GM12878 (cell line): ENCODE measurements at regions of chr1 and their contacts with region 1.

Region 1: GRCh38 chr1:202112839-202113672 is 9.7 kb upstream of the GPR37L1 start:
- DNase-seq: no peak
- ATAC-seq: peak; percentile 24
- H3K4me3 ChIP-seq: no peak overlapping the region
- H3K27ac ChIP-seq: no peak overlapping the region
- H3K4me1 ChIP-seq: peaks cover 14% of the 10 kb centered on the region
- H3K27me3 ChIP-seq: no peaks in the 10 kb centered on the region
- CTCF ChIP-seq: no peak
- EP300 ChIP-seq: no peak
- POLR2A ChIP-seq: no peak
- RAD21 ChIP-seq: no peak

Region 2: DNA sequence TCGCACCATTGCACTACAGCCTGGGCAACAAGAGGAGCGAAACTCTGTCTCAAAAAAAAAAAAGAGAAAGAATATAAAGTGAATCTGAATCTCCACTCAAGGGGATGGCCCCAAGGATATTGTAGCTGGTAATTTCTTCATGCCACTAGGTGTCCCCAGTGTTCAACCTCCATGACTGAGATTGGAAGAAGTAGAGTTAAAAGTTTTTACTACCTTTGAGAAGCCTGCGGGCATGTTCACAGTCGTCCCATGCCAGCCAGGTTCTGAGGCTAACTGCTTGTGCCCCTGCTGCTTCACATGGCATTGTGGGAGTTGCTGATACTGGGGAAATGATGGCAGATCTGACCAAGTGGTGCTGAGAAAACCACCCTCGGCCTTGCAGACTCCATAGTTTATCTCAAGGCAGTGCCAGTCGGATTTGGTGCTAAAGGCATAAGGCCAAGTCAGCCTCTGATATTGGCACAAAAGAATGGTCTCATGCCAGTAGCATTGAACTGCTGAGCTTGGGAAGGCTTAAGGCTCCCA is 235.1 kb before region 1 on chr1:
- CTCF ChIA-PET with region 1: interaction called, 13 read pairs
- POLR2A ChIA-PET with region 1: no interaction called
- RAD21 ChIA-PET with region 1: interaction called, 3 read pairs
- SMC1A ChIA-PET with region 1: interaction called, 3 read pairs
- in situ Hi-C with region 1: no loop called
- intact Hi-C with region 1: loop called (anchors 5 kb)
- DNase-seq: no peak
- ATAC-seq: peak; percentile 86
- H3K4me3 ChIP-seq: no peak overlapping the region
- H3K27ac ChIP-seq: no peak overlapping the region
- H3K4me1 ChIP-seq: peaks cover 5% of the 10 kb centered on the region; the same call in 1 of the 2 replicates
- H3K27me3 ChIP-seq: no peaks in the 10 kb centered on the region
- CTCF ChIP-seq: peak; percentile 52 to 68 (median 57)
- EP300 ChIP-seq: no peak
- POLR2A ChIP-seq: peak; percentile 36; the same call in 1 of the 2 replicates
- RAD21 ChIP-seq: peak; percentile 52

Region 3: DNA sequence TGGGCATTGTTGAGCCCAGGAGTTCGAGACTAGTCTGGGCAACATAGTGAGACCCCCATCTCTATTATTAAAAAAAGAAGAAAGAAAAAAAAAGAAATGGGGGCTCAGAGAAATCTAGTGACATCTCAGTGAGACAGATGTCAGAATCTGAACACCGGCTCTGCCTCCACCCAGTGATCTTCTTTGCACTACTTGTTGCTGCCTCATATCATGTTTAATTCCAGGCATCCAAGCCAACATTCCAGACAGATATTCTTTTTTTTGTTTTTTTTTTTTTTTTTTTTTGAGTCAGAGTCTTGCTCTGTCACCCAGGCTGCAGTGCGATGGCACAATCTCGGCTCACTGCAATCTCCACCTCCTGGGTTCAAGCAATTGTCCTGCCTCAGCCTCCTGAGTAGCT is 36.5 kb after region 1 on chr1:
- CTCF ChIA-PET with region 1: no interaction called
- POLR2A ChIA-PET with region 1: no interaction called
- RAD21 ChIA-PET with region 1: no interaction called
- SMC1A ChIA-PET with region 1: no interaction called
- in situ Hi-C with region 1: no loop called
- intact Hi-C with region 1: no loop called
- DNase-seq: no peak
- ATAC-seq: no peak
- H3K4me3 ChIP-seq: no peak overlapping the region
- H3K27ac ChIP-seq: no peak overlapping the region
- H3K4me1 ChIP-seq: peaks cover 7% of the 10 kb centered on the region
- H3K27me3 ChIP-seq: no peaks in the 10 kb centered on the region
- CTCF ChIP-seq: no peak
- EP300 ChIP-seq: no peak
- POLR2A ChIP-seq: no peak
- RAD21 ChIP-seq: no peak